Mucosa of descending colon (tissue), 3 donors: ENCODE measurements at regions of chr5 and their contacts with region 1.

Region 1: GRCh38 chr5:52657247-52657645 is 130.5 kb upstream of the ITGA1 start:
- DNase-seq: no peak
- ATAC-seq: no peak
- H3K4me3 ChIP-seq: no peak overlapping the region
- H3K4me1 ChIP-seq: no peaks in the 10 kb centered on the region
- CTCF ChIP-seq: peak; percentile 2

Region 2: GRCh38 chr5:50962934-50963872 is 1694.0 kb before region 1 on chr5:
- intact Hi-C with region 1: loop called in 1 of 2 experiments (anchors 10 kb)
- DNase-seq: peak in 2 of 3 donors; percentile 76 to 78
- ATAC-seq: peak; percentile 92
- H3K4me3 ChIP-seq: no peak overlapping the region
- H3K4me1 ChIP-seq: peaks cover 12% of the 10 kb centered on the region
- CTCF ChIP-seq: peak; percentile 61